ENCODE measurements at regions of chr18 and their contacts with region 1.

Region 1: DNA sequence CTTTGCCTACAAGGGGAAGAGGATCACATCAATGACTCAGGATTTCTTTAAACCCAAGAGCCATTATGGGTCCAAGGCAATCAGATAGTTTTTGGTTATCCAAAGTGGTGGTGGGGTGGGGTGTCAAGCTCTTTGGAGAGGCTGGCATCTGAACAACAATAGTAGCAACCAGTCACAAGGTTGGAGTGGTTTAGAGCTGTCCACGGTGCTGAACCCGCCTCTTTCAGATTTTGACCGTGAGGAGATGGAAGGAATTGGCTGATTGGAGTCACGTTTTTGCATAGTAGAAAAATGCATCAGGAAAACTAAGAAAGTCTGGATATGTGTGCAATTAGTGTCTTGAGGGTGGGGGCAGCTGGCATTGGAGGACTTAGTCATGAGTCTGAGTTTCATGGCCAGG is 159.9 kb downstream of the LOXHD1 start:
- DNase-seq: peak in 4 of 9 experiments; percentile 7 to 30 (median 11)
- ATAC-seq: no peak
- H3K4me3 ChIP-seq: no peak overlapping the region
- H3K4me3 Mint-ChIP-seq: no peak overlapping the region
- H3K27ac ChIP-seq: no peak overlapping the region
- H3K27ac Mint-ChIP-seq: no peak overlapping the region
- H3K4me1 ChIP-seq: no peaks in the 10 kb centered on the region
- H3K4me1 Mint-ChIP-seq: no peaks in the 10 kb centered on the region
- H3K27me3 ChIP-seq: no peaks in the 10 kb centered on the region
- H3K27me3 Mint-ChIP-seq: peaks cover 10% of the 10 kb centered on the region
- CTCF ChIP-seq: no peak

Region 2: GRCh38 chr18:46536215-46536874 is 39.2 kb after region 1 on chr18:
- CTCF ChIA-PET with region 1: no interaction called
- POLR2A ChIA-PET with region 1: no interaction called
- intact Hi-C with region 1: loop called in 1 of 2 experiments (anchors 1 kb)
- DNase-seq: peak in 2 of 9 experiments; percentile 60 to 63
- ATAC-seq: peak; percentile 14
- H3K4me3 ChIP-seq: no peak overlapping the region
- H3K4me3 Mint-ChIP-seq: no peak overlapping the region
- H3K27ac ChIP-seq: no peak overlapping the region
- H3K27ac Mint-ChIP-seq: no peak overlapping the region
- H3K4me1 ChIP-seq: no peaks in the 10 kb centered on the region
- H3K4me1 Mint-ChIP-seq: no peaks in the 10 kb centered on the region
- H3K27me3 ChIP-seq: no peaks in the 10 kb centered on the region
- H3K27me3 Mint-ChIP-seq: peaks cover 3% of the 10 kb centered on the region
- CTCF ChIP-seq: no peak

Measured in CD8-positive, alpha-beta T cell (primary cell).